ENCODE measurements at regions of chr1 and their contacts with region 1.

Region 1: DNA sequence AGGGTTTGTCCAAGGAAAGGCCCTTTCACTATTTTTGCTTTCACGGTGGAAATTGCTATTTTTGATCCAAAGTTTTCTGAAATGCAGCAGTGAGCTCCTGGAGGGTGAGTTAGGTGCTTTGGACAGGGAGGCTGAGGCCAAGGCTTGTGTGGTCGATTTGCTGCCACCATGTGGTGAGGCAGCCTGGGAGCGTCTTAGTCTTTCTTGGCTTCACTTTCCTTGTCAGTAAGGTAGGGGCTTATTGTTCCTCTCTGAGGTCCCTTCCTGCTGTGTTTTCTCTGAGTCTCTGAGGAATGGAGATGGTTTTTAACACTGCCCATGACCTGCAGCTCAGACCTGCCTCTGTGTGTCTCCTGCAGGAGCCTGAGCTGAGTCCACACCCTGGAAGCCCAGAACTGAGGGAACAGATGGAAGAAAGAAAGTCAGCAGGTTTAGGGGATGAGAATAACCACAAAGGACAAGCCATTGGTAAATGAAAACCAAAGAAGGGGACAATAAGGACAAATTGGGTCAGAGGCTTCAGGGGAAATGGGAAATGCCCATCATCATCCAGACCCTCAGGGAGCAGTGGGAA is 20.1 kb upstream of the S100A10 start:
- DNase-seq: peak; percentile 48
- H3K4me3 ChIP-seq: no peak overlapping the region
- H3K27ac ChIP-seq: no peak overlapping the region
- H3K4me1 ChIP-seq: no peaks in the 10 kb centered on the region
- H3K27me3 ChIP-seq: peaks cover 10 to 36% of the 10 kb centered on the region in 2 experiments
- CTCF ChIP-seq: peak; percentile 63 to 81
- POLR2A ChIP-seq: no peak

Region 2: DNA sequence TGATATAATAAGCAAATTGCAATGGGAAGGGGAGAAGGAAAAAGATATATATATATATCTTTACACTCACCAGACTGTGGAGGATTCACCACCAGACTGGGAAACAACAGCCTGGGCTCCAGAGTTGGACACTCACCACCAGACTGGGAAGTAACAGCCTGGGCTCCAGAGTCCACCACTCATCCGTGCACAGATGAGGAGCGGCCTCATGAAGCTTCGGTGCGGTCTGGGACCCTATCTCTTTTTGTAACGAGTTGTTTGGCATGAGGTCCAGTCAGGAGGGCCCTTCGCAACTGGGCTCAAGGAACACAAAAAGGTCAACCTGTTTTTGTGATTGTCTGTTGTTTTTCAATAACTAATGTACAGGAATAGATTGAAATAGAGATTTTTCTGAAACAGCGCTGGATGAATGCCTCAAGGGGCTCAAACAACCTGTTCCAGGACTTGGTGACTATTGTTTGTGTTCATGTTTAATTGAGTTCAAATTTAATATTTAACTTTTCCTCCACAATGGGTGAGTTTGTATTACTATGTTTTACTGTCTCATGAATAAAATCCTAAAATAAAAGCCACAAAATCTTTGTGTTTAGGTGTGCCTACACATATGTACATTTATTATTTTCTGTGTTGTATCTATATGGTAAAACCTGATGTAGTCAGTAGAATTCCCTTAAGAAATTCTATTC is 60.2 kb before region 1 on chr1:
- CTCF ChIA-PET with region 1: no interaction called
- POLR2A ChIA-PET with region 1: no interaction called
- dilution Hi-C with region 1: no loop called
- intact Hi-C with region 1: no loop called
- DNase-seq: no peak
- H3K4me3 ChIP-seq: no peak overlapping the region
- H3K27ac ChIP-seq: no peak overlapping the region
- H3K4me1 ChIP-seq: no peaks in the 10 kb centered on the region
- H3K27me3 ChIP-seq: no peaks in the 10 kb centered on the region
- CTCF ChIP-seq: no peak
- POLR2A ChIP-seq: no peak

Region 3: GRCh38 chr1:152034646-152035405 is 21.1 kb after region 1 on chr1:
- CTCF ChIA-PET with region 1: interaction called, 11 read pairs
- POLR2A ChIA-PET with region 1: no interaction called
- dilution Hi-C with region 1: no loop called
- intact Hi-C with region 1: no loop called
- DNase-seq: peak; percentile 60
- H3K4me3 ChIP-seq: peak overlapping the region; percentile 55 to 99 (median 98)
- H3K27ac ChIP-seq: peak overlapping the region; percentile 81
- H3K4me1 ChIP-seq: peaks cover 21% of the 10 kb centered on the region
- H3K27me3 ChIP-seq: peaks cover 6 to 9% of the 10 kb centered on the region in 2 experiments
- CTCF ChIP-seq: peak; percentile 66 to 74
- POLR2A ChIP-seq: peak; percentile 25

Region 4: DNA sequence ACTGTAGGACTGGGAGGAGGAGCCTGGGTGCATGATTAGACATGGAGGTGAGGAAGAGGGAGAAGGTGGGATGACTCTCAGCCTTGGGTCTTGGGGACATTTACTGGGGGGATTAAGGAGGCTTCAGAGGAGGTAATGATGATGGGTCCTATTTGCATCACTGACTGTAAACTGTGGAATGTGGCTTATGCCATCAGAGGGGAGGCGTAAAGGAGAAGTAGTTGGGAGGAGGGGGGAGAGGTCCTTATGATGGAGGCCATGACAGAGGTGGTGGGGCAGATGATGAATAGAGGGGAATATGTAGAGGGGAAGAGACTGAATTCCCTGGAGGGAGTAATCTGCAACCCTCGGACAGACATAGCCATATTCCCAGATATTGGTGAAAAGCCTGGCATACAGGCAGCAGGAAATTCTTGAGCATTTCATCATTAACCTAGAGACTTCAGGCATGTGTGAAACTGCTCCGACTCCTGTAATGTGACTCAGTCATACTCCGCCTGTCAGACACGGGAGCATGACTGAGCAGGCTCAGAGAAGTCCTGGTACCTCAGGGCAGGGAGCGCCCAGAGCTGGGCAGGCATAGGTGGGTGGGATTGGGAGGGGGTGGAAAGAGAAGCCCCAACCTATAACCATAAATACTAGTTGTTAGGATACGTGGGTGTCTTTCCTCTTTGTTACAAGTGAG is 488.9 kb after region 1 on chr1:
- CTCF ChIA-PET with region 1: no interaction called
- POLR2A ChIA-PET with region 1: no interaction called
- dilution Hi-C with region 1: no loop called
- intact Hi-C with region 1: no loop called
- DNase-seq: no peak
- H3K4me3 ChIP-seq: no peak overlapping the region
- H3K27ac ChIP-seq: no peak overlapping the region
- H3K4me1 ChIP-seq: no peaks in the 10 kb centered on the region
- H3K27me3 ChIP-seq: no peaks in the 10 kb centered on the region
- CTCF ChIP-seq: no peak
- POLR2A ChIP-seq: no peak

Measured in endothelial cell of umbilical vein (primary cell).